ENCODE measurements at regions of chr21 and their contacts with region 1.

Region 1: GRCh38 chr21:36060159-36060921 is at the start of gene SETD4:
- DNase-seq: peak; percentile 95
- ATAC-seq: peak; percentile 92
- H3K4me3 Mint-ChIP-seq: peak within 1 kb of the TSS; percentile 89
- H3K27ac Mint-ChIP-seq: peak within 1 kb of the TSS; percentile 92
- H3K4me1 Mint-ChIP-seq: peaks cover 15% of the 10 kb centered on the region
- H3K27me3 Mint-ChIP-seq: no peaks in the 10 kb centered on the region
- total RNA-seq, gene SETD4: 11.0 to 17.6 TPM

Region 2: GRCh38 chr21:36035381-36035791 is 25.0 kb before region 1 on chr21:
- CTCF ChIA-PET with region 1: no interaction called
- POLR2A ChIA-PET with region 1: no interaction called
- intact Hi-C with region 1: no loop called
- DNase-seq: no peak
- ATAC-seq: no peak
- H3K4me3 Mint-ChIP-seq: no peak overlapping the region
- H3K27ac Mint-ChIP-seq: no peak overlapping the region
- H3K4me1 Mint-ChIP-seq: no peaks in the 10 kb centered on the region
- H3K27me3 Mint-ChIP-seq: no peaks in the 10 kb centered on the region

Region 3: GRCh38 chr21:36079010-36079649 is 18.8 kb after region 1 on chr21:
- CTCF ChIA-PET with region 1: interaction called, 3 read pairs
- POLR2A ChIA-PET with region 1: interaction called, 5 read pairs
- intact Hi-C with region 1: loop called (anchors 1 kb)
- DNase-seq: peak; percentile 70
- ATAC-seq: peak; percentile 92
- H3K4me3 Mint-ChIP-seq: peak overlapping the region; percentile 64
- H3K27ac Mint-ChIP-seq: peak overlapping the region; percentile 96
- H3K4me1 Mint-ChIP-seq: peaks cover 34% of the 10 kb centered on the region
- H3K27me3 Mint-ChIP-seq: no peaks in the 10 kb centered on the region

Region 4: DNA sequence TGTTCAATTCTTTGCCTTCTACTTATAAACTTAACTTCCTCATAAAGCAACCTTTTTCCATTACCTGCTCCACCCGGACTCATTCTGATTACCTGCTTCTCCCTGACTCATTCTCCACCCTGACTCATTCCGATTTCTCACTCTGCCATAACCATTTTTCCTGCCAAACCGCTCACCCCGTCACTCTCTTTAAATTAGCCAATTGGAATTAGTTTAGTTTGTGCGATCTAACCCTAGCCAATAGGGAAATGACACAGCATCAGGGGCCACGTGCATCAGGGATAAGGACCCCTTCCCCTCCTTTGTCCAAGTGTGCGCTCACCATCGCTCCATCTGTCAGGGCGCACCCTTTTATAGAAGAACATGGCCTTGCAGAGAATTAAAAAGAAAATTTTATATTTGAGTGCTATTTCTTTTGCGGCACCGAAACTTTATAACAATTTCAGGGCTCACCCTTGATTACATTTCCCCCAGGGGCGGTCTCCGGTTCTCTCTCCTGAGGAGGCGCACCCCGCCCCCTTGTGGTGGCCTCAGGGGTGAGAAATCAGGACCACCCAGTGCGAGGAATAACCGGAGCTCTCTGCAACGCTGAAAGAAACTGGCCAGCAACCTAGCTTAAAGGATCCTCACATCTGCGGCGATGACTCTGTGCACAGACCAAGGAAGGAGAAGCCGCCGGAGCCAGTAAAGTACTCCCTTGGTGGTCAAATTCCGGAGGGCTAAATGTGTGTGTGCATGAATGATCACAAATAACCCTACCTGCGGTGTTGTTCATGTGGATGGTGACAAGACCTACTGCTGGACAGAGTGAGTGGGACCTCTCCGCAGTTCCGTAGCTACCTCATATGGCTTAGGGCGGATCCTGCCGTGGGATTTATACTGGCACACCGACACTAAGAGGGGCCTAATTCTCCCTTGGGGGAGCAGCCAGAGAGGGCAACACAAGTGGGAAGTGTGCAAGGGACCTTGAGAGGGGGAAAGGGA is 44.3 kb after region 1 on chr21:
- CTCF ChIA-PET with region 1: interaction called, 3 read pairs
- POLR2A ChIA-PET with region 1: no interaction called
- intact Hi-C with region 1: loop called in 1 of 2 experiments (anchors 1 kb)
- DNase-seq: peak; percentile 69
- ATAC-seq: peak; percentile 63
- H3K4me3 Mint-ChIP-seq: peak overlapping the region; percentile 64
- H3K27ac Mint-ChIP-seq: peak overlapping the region; percentile 65
- H3K4me1 Mint-ChIP-seq: peaks cover 15% of the 10 kb centered on the region
- H3K27me3 Mint-ChIP-seq: peaks cover 31% of the 10 kb centered on the region

Region 5: GRCh38 chr21:36135391-36136102 is 75.2 kb after region 1 on chr21:
- CTCF ChIA-PET with region 1: no interaction called
- POLR2A ChIA-PET with region 1: no interaction called
- intact Hi-C with region 1: loop called in 1 of 2 experiments (anchors 2 kb)
- DNase-seq: peak; percentile 78
- ATAC-seq: peak; percentile 73
- H3K4me3 Mint-ChIP-seq: peak overlapping the region; percentile 87
- H3K27ac Mint-ChIP-seq: peak overlapping the region; percentile 78
- H3K4me1 Mint-ChIP-seq: peaks cover 22% of the 10 kb centered on the region
- H3K27me3 Mint-ChIP-seq: no peaks in the 10 kb centered on the region

Region 6: DNA sequence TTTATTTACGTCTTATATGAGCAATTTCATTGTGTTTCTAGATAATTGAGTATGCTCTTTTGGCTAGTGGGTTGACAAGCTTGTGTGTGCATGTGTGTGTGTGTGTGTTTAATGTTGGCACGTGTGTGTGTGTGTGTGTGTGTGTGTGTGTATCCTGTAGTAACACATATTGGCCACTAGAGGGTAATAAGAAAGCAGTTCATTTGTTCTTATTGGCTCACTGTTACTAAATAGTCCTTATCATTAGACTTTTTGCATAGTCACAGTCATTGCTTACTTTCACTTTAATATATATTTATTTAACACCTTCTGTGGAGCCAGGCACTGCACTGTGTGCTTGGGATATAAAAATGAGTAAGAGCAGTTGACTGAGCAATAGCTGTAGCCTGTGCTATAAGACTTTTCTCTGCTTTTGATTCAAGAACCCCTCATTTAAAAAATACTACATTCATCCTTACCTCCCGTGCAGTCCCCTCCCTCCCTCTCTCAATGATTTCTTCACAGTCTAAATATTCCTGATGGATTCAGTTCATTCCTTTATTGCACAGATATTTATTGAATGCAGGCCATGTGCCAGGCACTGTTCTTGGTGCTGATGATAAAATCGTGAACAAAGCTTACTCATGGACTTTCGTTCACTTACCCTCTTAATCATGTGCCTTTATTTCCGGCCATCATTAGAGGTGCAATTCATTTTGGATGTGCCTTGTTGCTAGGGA is 1402.9 kb after region 1 on chr21:
- CTCF ChIA-PET with region 1: no interaction called
- POLR2A ChIA-PET with region 1: no interaction called
- intact Hi-C with region 1: no loop called
- DNase-seq: peak; percentile 23
- ATAC-seq: peak; percentile 55
- H3K4me3 Mint-ChIP-seq: no peak overlapping the region
- H3K27ac Mint-ChIP-seq: peak overlapping the region; percentile 71
- H3K4me1 Mint-ChIP-seq: peaks cover 70% of the 10 kb centered on the region
- H3K27me3 Mint-ChIP-seq: no peaks in the 10 kb centered on the region